Mammary epithelial cell (primary cell): ENCODE measurements at regions of chr1 and their contacts with region 1.

Region 1: DNA sequence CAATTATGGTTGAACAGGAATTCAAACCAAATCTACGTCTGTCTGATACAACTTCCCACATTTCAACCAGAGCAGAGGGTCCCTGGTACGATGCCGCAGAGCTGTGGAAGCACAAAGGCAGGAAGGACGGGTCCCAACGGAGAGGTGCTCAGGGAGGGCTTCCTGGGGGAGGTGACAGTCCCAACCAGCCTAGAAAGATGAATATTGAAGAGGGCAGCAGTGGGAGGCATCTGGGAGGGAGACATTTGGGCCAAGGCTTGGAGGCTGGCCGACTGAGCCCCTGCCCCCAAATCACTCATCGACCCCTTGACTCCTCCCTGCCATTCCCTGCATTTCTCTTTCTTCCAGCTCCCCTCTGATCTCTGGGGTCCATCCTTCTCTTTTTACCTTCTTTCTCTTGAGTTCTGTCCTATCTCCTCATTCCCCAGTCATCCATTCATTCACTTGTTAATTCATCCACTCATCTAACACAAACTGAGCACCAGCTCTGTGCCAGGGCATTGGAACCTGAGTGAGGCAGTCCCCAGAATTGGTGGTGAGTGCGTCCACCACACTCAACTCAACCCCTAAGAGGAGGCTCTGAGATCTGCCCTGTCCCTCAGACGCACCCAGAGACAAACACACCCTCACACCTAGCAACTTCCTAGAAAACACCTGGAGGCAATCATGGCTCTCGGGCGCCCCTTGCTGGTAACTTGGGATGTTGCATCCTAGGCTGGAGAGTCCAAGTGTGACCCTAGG is 13.2 kb upstream of the CELA3B start:
- DNase-seq: peak; percentile 71
- H3K4me3 ChIP-seq: no peak overlapping the region
- H3K27ac ChIP-seq: no peak overlapping the region
- H3K4me1 ChIP-seq: peaks cover 3% of the 10 kb centered on the region
- H3K27me3 ChIP-seq: no peaks in the 10 kb centered on the region
- CTCF ChIP-seq: peak; percentile 94

Region 2: DNA sequence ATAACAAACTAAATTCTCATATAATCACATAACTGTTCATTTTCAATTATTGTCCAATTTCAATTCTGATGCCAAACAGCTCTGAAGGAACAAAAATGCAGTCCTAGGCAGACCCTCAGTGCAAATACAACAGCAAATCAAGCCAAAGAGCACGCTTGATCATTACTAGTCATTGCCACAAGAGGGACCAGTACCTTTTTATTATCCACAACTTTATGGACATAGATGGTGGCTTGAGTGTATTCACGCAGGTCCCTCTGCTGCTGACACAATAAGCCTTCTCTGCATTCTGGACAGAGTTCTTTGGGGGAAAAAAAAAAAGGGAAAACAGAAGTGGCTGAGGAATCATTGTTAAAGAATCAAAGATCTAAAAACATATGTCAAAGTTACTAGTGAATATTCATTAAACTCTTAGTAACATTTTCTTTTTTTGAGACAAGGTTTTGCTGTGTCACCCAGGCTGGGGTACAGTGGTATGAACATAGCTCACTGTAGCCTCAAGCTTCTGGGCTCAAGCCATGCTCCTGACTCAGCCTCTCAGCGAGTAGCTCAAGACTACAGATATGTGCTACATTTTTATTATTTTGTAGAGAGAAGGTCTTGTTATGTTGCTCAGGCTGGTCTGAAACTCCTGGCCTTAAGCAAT is 260.2 kb before region 1 on chr1:
- CTCF ChIA-PET with region 1: no interaction called
- dilution Hi-C with region 1: no loop called
- in situ Hi-C with region 1: loop called in 1 of 2 experiments (anchors 25 kb)
- intact Hi-C with region 1: loop called (anchors 1 kb)
- DNase-seq: peak; percentile 23
- H3K4me3 ChIP-seq: no peak overlapping the region
- H3K27ac ChIP-seq: no peak overlapping the region
- H3K4me1 ChIP-seq: no peaks in the 10 kb centered on the region
- H3K27me3 ChIP-seq: no peaks in the 10 kb centered on the region
- CTCF ChIP-seq: peak; percentile 40 to 43

Region 3: DNA sequence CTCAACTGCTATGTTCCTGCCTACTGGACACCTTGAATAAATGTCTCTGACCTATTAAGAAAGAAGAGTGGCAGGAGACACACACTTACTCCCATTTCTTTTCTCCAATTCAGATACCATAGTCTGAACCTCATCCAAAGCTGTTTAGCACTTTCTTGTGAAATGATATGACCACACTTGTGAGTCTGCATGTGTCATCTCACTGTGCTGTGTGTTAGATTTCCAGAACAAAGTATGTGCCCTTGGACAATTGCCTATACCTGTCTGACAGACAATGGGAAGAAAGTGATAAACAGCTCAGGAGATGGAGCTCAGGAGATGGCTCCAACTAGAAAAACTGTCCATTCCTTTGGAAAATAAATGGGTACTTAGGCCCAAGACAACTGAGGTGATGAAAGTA is 229.1 kb before region 1 on chr1:
- CTCF ChIA-PET with region 1: no interaction called
- dilution Hi-C with region 1: no loop called
- in situ Hi-C with region 1: no loop called
- intact Hi-C with region 1: no loop called
- DNase-seq: peak; percentile 51
- H3K4me3 ChIP-seq: no peak overlapping the region
- H3K27ac ChIP-seq: no peak overlapping the region
- H3K4me1 ChIP-seq: no peaks in the 10 kb centered on the region
- H3K27me3 ChIP-seq: no peaks in the 10 kb centered on the region
- CTCF ChIP-seq: no peak

Region 4: GRCh38 chr1:21869620-21870121 is 94.0 kb before region 1 on chr1:
- CTCF ChIA-PET with region 1: no interaction called
- dilution Hi-C with region 1: no loop called
- in situ Hi-C with region 1: loop called in 1 of 2 experiments (anchors 25 kb)
- intact Hi-C with region 1: loop called (anchors 1 kb)
- DNase-seq: peak; percentile 95
- H3K4me3 ChIP-seq: no peak overlapping the region
- H3K27ac ChIP-seq: peak overlapping the region; percentile 5
- H3K4me1 ChIP-seq: peaks cover 40% of the 10 kb centered on the region
- H3K27me3 ChIP-seq: no peaks in the 10 kb centered on the region
- CTCF ChIP-seq: no peak

Region 5: DNA sequence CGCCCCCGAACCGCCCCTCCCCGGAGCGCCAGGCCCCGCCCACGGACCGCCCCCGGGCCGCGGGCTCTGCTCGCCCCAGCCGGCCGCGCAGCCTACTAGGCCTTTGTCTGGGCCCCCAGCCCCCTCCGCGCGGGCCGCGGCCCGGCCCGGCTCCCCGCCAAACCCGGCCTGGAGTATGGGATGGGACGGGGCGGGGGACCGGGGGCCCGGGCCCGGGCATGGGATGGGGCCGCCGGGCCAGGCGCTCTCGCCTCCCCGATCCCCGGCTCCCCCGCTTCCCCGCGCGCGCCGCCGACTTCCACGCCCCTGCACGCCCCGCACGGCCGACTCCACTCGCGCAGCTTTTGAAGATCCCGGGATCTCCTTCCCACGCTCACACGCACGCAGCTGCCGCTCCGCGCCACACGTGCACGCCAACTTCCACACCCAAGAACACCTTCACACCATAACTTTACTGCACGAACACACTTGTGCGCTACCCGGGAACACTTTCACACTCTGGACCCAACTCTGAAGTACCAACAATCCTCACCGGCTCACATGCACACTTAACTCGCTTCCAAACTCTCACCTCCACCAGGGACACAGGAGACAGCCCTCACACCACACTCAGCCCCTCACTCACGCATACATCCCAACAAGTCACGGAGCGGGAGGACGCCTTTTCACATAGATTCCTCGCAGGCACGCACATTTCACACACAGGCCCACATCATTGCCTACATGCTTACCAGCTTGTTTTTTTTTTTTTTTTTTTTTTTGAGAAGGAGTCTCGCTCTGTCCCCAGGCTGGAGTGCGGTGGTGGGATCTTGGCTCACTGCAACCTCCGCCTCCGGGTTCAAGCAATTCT is 26.1 kb before region 1 on chr1:
- CTCF ChIA-PET with region 1: interaction called, 4 read pairs
- dilution Hi-C with region 1: no loop called
- in situ Hi-C with region 1: no loop called
- intact Hi-C with region 1: loop called (anchors 1 kb)
- DNase-seq: peak; percentile 79
- H3K4me3 ChIP-seq: peak overlapping the region; percentile 15 to 33 (median 18)
- H3K27ac ChIP-seq: peak overlapping the region; percentile 41
- H3K4me1 ChIP-seq: peaks cover 56% of the 10 kb centered on the region
- H3K27me3 ChIP-seq: no peaks in the 10 kb centered on the region
- CTCF ChIP-seq: no peak